ENCODE measurements at regions of chr19 and their contacts with region 1.

Region 1: GRCh38 chr19:14689598-14690503 is at the start of gene ZNF333:
- DNase-seq: peak; percentile 93
- ATAC-seq: peak; percentile 88
- H3K4me3 Mint-ChIP-seq: peak within 1 kb of the TSS; percentile 97
- H3K27ac Mint-ChIP-seq: peak within 1 kb of the TSS; percentile 100
- H3K4me1 Mint-ChIP-seq: peaks cover 45% of the 10 kb centered on the region
- H3K27me3 Mint-ChIP-seq: no peaks in the 10 kb centered on the region
- CTCF ChIP-seq: no peak
- total RNA-seq, gene ZNF333: 24.0 and 26.2 TPM in 2 replicates

Region 2: GRCh38 chr19:14517840-14518505 is 171.9 kb before region 1 on chr19 and contains the start of gene DNAJB1:
- CTCF ChIA-PET with region 1: no interaction called
- POLR2A ChIA-PET with region 1: interaction called, 5 read pairs
- intact Hi-C with region 1: loop called (anchors 1 kb)
- DNase-seq: peak; percentile 78
- ATAC-seq: peak; percentile 48
- H3K4me3 Mint-ChIP-seq: peak within 1 kb of the TSS; percentile 91
- H3K27ac Mint-ChIP-seq: peak within 1 kb of the TSS; percentile 95
- H3K4me1 Mint-ChIP-seq: peaks cover 65% of the 10 kb centered on the region
- H3K27me3 Mint-ChIP-seq: no peaks in the 10 kb centered on the region
- CTCF ChIP-seq: no peak
- total RNA-seq, gene DNAJB1: 56.1 and 58.7 TPM in 2 replicates

Region 3: DNA sequence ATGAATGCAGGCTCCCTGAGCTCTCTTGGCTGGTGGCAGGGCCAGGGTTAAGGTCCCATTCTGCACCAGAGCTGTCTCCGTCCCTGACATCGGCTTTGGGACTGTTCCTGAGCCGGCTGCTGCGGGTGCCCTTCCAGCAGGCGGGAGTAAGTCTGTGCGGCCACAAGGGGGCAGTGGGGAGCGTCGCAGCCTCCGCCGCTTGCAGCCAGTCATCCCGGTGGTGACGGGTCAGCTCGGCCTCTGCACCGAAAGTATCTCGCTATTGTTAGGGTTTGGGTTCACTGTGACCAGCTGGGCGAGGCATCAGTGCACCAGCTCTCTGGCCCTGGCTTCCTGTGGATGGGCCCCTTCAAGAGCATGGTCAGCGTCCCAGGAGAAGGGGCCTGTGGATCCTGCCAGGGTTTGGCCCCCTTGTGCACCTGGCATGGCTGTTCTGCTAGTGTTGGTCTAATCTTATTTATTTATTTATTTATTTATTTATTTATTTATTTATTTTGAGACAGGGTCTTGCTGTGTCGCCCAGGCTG is 133.1 kb before region 1 on chr19:
- CTCF ChIA-PET with region 1: interaction called, 17 read pairs
- POLR2A ChIA-PET with region 1: interaction called, 4 read pairs
- intact Hi-C with region 1: no loop called
- DNase-seq: peak; percentile 67
- ATAC-seq: peak; percentile 92
- H3K4me3 Mint-ChIP-seq: peak overlapping the region; percentile 35
- H3K27ac Mint-ChIP-seq: no peak overlapping the region
- H3K4me1 Mint-ChIP-seq: peaks cover 28% of the 10 kb centered on the region
- H3K27me3 Mint-ChIP-seq: no peaks in the 10 kb centered on the region
- CTCF ChIP-seq: peak; percentile 66

Region 4: GRCh38 chr19:14603990-14604387 is 85.9 kb before region 1 on chr19:
- CTCF ChIA-PET with region 1: interaction called, 25 read pairs
- POLR2A ChIA-PET with region 1: interaction called, 9 read pairs
- intact Hi-C with region 1: no loop called
- DNase-seq: peak; percentile 39
- ATAC-seq: peak; percentile 88
- H3K4me3 Mint-ChIP-seq: peak overlapping the region; percentile 72
- H3K27ac Mint-ChIP-seq: peak overlapping the region; percentile 93
- H3K4me1 Mint-ChIP-seq: peaks cover 62% of the 10 kb centered on the region
- H3K27me3 Mint-ChIP-seq: no peaks in the 10 kb centered on the region
- CTCF ChIP-seq: no peak

Region 5: DNA sequence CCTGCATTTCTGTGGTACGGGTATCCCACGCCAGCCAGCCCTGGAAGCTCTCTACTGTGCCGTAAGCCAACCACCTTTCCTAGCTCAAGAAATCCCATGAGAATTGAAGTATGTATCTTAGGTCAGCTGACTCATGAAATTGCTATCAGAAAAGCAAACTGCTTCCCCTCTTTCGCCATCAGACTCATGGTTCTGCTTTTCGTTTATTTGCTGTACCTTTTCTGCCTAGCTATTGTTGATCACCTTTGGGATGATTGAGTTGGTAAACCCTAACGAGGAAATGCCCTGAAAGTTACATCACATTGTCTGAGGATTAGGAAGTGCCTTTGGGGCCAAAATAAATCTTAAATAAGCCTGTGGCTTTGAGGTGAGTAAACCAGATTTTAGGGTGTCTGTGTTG is 15.1 kb before region 1 on chr19 and contains the start of gene ADGRE3:
- CTCF ChIA-PET with region 1: interaction called, 40 read pairs
- POLR2A ChIA-PET with region 1: interaction called, 11 read pairs
- intact Hi-C with region 1: loop called (anchors 2 kb)
- DNase-seq: no peak
- ATAC-seq: peak; percentile 70
- H3K4me3 Mint-ChIP-seq: peak within 1 kb of the TSS; percentile 49
- H3K27ac Mint-ChIP-seq: peak within 1 kb of the TSS; percentile 78
- H3K4me1 Mint-ChIP-seq: peaks cover 32% of the 10 kb centered on the region
- H3K27me3 Mint-ChIP-seq: no peaks in the 10 kb centered on the region
- CTCF ChIP-seq: no peak
- total RNA-seq, gene ADGRE3: not detected in 2 replicates

Measured in activated B cell treated with CpG ODN at 0.5 μM for 24 hours (primary cell).